Motor neuron (in vitro differentiated cells): ENCODE measurements at regions of chr1 and their contacts with region 1.

Region 1: DNA sequence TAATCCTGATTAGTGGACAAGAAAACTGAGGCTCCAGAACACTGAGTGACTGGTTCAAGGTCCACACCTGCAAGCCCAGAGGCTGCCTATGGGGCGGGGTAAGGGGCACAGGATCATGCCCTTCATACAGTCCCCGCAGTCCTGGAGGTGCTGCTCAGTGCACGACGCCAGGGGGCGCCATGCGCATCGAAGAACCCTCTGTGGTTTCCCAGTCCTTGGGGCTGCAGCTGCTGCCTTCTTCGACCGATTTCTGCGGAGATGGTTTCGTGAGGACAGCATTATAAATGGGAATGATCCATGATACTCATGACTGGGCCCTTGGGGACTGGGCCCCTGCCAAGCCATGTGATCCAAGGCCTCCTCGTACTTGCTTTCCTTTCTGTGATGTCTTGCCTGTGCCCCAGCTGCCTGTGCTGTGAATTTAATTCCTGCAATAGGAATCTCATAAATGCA is 37.1 kb upstream of the ARHGEF10L start:
- ATAC-seq: peak; percentile 97 to 100 (median 99)
- H3K4me3 ChIP-seq: no peak overlapping the region
- H3K27ac ChIP-seq: no peak overlapping the region
- H3K4me1 ChIP-seq: peaks cover 3 to 7% of the 10 kb centered on the region in 2 donors

Region 2: DNA sequence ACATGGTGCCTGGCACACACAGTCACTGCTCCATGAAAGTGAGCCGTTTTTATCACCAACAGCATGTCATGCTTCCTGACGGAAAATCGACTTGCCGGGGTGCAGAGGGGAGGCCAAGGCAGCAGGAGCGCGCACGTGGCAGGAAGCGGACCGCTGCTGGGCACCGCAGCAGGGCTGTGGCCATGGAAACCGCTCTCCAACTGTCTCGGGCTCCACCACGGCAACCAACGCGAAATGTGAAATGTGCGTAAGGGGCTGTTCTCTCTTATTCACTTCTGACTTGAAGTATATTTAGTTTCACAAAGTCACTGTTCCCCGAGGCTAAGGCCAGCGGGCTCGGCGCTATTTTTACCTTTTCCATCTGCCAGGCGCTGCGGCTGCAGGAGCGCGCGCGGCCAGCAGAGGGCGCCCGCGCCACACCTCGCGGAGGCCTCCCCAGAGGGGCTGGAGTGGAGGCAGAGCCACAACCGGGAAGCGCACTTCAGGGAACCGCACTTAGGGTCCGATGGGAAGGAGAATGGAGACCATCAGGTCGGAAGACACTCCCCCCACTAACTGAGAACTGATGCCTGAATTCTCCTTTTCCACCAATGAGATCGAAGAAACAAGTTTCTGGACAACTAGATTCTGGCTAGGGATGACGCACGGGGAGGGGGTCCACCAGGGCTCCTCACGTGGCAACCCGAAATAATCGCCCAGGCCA is 82.6 kb before region 1 on chr1:
- in situ Hi-C with region 1: no loop called
- ATAC-seq: peak; percentile 80 to 93 (median 90)
- H3K4me3 ChIP-seq: no peak overlapping the region
- H3K27ac ChIP-seq: no peak overlapping the region
- H3K4me1 ChIP-seq: peaks cover 0 to 11% of the 10 kb centered on the region in 2 donors

Region 3: GRCh38 chr1:17596651-17597509 is 94.5 kb after region 1 on chr1:
- in situ Hi-C with region 1: loop called in 5 of 9 experiments (anchors 10 kb)
- ATAC-seq: peak in 5 of 8 experiments; percentile 59 to 89 (median 81)
- H3K4me3 ChIP-seq: no peak overlapping the region
- H3K27ac ChIP-seq: peak overlapping the region; percentile 50 to 57
- H3K4me1 ChIP-seq: peaks cover 18 to 23% of the 10 kb centered on the region in 2 donors

Region 4: DNA sequence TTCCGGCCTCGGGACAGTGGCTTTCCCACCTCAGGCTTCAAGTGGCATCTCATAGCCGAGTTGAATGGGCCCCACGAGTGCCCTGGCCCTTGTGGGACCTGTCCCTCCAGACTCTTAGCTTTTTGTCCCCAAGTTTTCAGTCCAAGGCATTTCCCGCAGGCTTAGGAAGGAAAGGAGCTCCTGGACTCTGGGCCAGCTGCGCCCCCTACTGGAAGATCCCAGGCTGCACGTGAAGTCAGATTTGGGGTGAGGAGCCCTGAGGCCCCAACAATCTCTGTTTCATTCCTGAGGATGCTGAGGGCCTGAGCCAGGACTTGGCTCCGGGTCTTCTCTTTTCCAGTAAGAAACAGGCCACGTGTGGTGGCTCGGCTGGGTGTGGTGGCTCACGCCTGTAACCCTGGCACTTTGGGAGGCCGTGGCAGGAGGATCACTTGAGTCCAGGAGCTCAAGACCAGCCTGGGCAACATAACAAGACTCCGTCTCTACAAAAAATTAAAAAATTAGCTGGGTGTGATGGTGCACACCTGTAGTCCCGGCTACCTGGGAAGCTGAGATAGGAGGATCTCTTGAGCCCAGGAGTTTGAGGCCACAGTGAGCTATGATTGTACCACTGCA is 104.6 kb after region 1 on chr1:
- in situ Hi-C with region 1: loop called in 4 of 9 experiments (anchors 10 kb)
- ATAC-seq: peak in 3 of 8 experiments; percentile 46 to 80 (median 68)
- H3K4me3 ChIP-seq: no peak overlapping the region
- H3K27ac ChIP-seq: no peak overlapping the region
- H3K4me1 ChIP-seq: peaks cover 26 to 31% of the 10 kb centered on the region in 2 donors